ENCODE measurements at regions of chr9 and their contacts with region 1.

Region 1: DNA sequence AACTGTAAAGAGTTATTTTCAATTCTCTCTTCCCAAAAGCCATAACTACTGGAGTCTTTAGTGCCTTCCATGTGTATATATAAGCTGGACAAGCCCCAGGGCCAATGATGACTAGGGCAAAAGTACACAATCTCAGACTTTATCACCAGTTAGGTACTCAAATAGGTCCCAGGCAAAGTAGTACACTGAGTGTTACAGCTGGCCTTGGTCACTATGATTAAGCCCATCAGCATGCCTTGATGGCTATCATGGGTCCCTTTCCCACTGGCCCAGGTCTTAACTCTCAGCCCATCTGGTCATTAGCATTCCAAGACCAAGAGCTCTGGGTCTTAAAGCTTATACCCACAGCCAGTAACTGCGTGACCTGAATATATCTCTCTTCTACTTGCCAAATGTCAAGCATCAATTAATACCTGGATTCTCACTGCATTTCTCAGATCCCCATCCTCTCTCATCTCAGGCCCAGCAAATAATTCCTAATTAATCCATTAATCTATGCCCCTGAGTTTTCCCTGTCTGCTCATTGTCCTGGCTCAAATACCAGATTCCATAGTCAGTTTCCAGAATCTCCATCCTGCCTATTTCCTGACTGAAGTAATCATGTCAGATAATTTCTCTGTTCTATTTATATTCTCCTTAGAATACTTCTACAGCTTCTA is 62.3 kb downstream of the NR6A1 start:
- DNase-seq: no peak
- H3K4me3 ChIP-seq: no peak overlapping the region
- CTCF ChIP-seq: no peak

Region 2: GRCh38 chr9:124420991-124421543 is 287.7 kb before region 1 on chr9:
- CTCF ChIA-PET with region 1: interaction called, 20 read pairs
- POLR2A ChIA-PET with region 1: no interaction called
- DNase-seq: no peak
- H3K4me3 ChIP-seq: no peak overlapping the region
- CTCF ChIP-seq: no peak

Region 3: GRCh38 chr9:124593651-124594058 is 115.1 kb before region 1 on chr9:
- CTCF ChIA-PET with region 1: interaction called, 12 read pairs
- POLR2A ChIA-PET with region 1: no interaction called
- DNase-seq: no peak
- H3K4me3 ChIP-seq: no peak overlapping the region
- CTCF ChIP-seq: no peak

Region 4: GRCh38 chr9:124658165-124659017 is 50.4 kb before region 1 on chr9:
- CTCF ChIA-PET with region 1: interaction called, 31 read pairs
- POLR2A ChIA-PET with region 1: interaction called, 14 read pairs
- DNase-seq: peak; percentile 97
- H3K4me3 ChIP-seq: peak overlapping the region; percentile 67
- CTCF ChIP-seq: no peak

Region 5: GRCh38 chr9:124721109-124721906 is 12.5 kb after region 1 on chr9:
- CTCF ChIA-PET with region 1: interaction called, 53 read pairs
- POLR2A ChIA-PET with region 1: no interaction called
- DNase-seq: no peak
- H3K4me3 ChIP-seq: no peak overlapping the region
- CTCF ChIP-seq: no peak

Region 6: DNA sequence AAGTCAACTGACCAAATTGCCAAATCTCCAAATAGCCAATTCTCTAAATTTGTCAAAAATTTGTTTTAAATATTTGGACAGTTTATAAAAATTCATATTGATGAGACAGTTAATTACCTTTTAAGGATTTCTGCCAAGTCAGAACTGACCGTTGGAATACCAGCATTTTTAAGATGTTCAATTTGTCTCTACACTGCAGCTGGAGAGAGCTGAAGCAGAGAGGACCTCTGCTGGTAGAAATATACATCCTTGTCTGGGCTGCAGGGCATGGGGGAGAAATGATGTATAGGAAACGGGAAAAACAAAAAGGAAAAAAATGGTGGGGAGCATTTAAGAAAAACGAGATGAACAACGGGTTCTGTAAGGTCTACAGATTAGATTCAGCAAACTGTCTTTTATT is 45.5 kb after region 1 on chr9:
- CTCF ChIA-PET with region 1: interaction called, 42 read pairs
- POLR2A ChIA-PET with region 1: no interaction called
- DNase-seq: no peak
- H3K4me3 ChIP-seq: no peak overlapping the region
- CTCF ChIP-seq: peak; percentile 62

Measured in AG04449 (cell line).